Left cardiac atrium (tissue), 4 donors: ENCODE measurements at regions of chr6 and their contacts with region 1.

Region 1: DNA sequence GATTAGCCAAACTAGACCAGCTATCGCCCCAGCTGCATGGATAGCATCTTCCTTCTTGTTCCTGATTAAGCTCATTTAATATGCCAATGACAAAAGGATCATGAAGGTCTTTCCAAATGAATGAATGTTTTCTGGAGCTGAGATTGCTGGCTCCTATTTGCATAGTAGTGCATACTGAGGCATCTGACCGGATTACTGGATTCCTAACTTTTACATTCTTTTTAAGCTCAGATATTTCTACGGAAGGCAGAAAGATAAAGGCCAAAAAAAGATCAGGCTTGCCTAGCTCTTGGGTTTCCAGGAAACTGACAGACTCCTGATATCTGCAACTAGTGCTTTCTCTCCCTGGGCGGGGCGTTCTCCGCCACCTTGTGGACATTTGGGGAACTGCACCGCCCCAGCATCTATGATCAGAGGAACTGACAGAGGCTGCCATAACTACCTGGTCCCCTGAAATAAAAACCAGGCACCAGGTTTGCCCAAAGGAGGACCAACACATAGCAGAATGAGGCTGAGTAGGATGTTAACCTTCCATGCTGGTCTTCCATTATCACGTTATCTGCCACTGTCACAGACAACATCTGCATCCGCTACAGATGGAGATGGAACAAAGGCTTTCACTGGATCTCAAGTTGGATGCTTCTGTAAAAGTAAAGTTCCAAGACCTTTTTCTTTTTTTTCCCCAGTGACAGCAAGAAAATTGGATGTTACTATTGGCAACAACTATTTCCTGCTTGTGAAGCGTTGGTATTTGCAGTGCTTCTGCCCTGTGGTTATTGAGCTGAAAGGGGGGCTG is 33.2 kb downstream of the NT5E start:
- DNase-seq: peak; percentile 76
- ATAC-seq: peak; percentile 88 to 93

Region 2: GRCh38 chr6:85354761-85355618 is 128.1 kb before region 1 on chr6:
- intact Hi-C with region 1: loop called (anchors 2 to 5 kb)
- DNase-seq: peak; percentile 72
- ATAC-seq: peak; percentile 88 to 91